Posterior vena cava (tissue), 2 donors: ENCODE measurements at regions of chr11 and their contacts with region 1.

Region 1: GRCh38 chr11:66934971-66935779 is 23.0 kb downstream of the PC start:
- DNase-seq: no peak

Region 2: GRCh38 chr11:66901964-66902390 is 33.2 kb before region 1 on chr11:
- intact Hi-C with region 1: loop called in 1 of 2 experiments (anchors 2 kb)
- DNase-seq: no peak

Region 3: DNA sequence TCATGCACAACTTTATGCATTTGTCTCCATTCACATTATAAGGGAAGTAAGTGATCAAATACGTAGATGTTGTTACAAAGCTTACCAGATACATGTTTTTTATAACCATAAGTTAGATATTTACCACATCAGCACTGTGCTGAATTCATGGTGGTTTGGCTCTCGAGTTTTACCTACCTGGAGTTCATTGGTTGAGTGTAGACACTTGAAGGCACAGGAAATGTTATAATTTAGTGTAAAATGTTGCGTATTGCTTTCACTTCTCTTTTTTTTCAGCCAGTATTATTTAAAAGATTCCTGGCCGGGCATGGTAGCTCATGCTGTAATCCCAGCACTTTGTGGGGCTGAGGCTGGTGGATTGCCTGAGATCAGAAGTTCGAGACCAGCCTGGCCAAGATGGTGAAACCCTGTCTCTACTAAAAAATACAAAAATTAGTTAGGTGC is 278.0 kb after region 1 on chr11:
- intact Hi-C with region 1: no loop called
- DNase-seq: no peak

Region 4: GRCh38 chr11:68354148-68354872 is 1419.1 kb after region 1 on chr11:
- intact Hi-C with region 1: no loop called
- DNase-seq: peak; percentile 95